ENCODE measurements at regions of chrX and their contacts with region 1.

Region 1: GRCh38 chrX:153609917-153610428 is 11.0 kb upstream of the CCNQ start:
- DNase-seq: peak; percentile 81
- ATAC-seq: peak; percentile 94
- H3K4me3 ChIP-seq: peak overlapping the region in 4 of 5 experiments; percentile 45 to 59 (median 56)
- H3K4me3 Mint-ChIP-seq: peak overlapping the region; percentile 85
- H3K27ac ChIP-seq: no peak overlapping the region
- H3K27ac Mint-ChIP-seq: no peak overlapping the region
- H3K4me1 ChIP-seq: peaks cover 0 to 15% of the 10 kb centered on the region in 2 donors
- H3K4me1 Mint-ChIP-seq: peaks cover 10% of the 10 kb centered on the region
- H3K27me3 ChIP-seq: peaks cover 0 to 5% (median 0%) of the 10 kb centered on the region in 4 experiments
- H3K27me3 Mint-ChIP-seq: peaks cover 12% of the 10 kb centered on the region
- CTCF ChIP-seq: peak; percentile 73

Region 2: GRCh38 chrX:153549231-153549630 is 60.7 kb before region 1 on chrX:
- CTCF ChIA-PET with region 1: no interaction called
- POLR2A ChIA-PET with region 1: no interaction called
- intact Hi-C with region 1: no loop called
- DNase-seq: no peak
- ATAC-seq: no peak
- H3K4me3 ChIP-seq: no peak overlapping the region
- H3K4me3 Mint-ChIP-seq: no peak overlapping the region
- H3K27ac ChIP-seq: no peak overlapping the region
- H3K27ac Mint-ChIP-seq: no peak overlapping the region
- H3K4me1 ChIP-seq: no peaks in the 10 kb centered on the region
- H3K4me1 Mint-ChIP-seq: no peaks in the 10 kb centered on the region
- H3K27me3 ChIP-seq: no peaks in the 10 kb centered on the region
- H3K27me3 Mint-ChIP-seq: peaks cover 6% of the 10 kb centered on the region
- CTCF ChIP-seq: no peak

Region 3: GRCh38 chrX:153582896-153583295 is 27.1 kb before region 1 on chrX:
- CTCF ChIA-PET with region 1: no interaction called
- POLR2A ChIA-PET with region 1: no interaction called
- intact Hi-C with region 1: no loop called
- DNase-seq: peak; percentile 84
- ATAC-seq: peak; percentile 100
- H3K4me3 ChIP-seq: peak overlapping the region in 3 of 5 experiments; percentile 9 to 26 (median 18)
- H3K4me3 Mint-ChIP-seq: peak overlapping the region; percentile 73
- H3K27ac ChIP-seq: peak overlapping the region in 1 of 2 donors; percentile 16
- H3K27ac Mint-ChIP-seq: peak overlapping the region; percentile 81
- H3K4me1 ChIP-seq: peaks cover 15 to 27% of the 10 kb centered on the region in 2 donors
- H3K4me1 Mint-ChIP-seq: peaks cover 25% of the 10 kb centered on the region
- H3K27me3 ChIP-seq: no peaks in the 10 kb centered on the region
- H3K27me3 Mint-ChIP-seq: no peaks in the 10 kb centered on the region
- CTCF ChIP-seq: no peak

Region 4: GRCh38 chrX:153662266-153662665 is 52.3 kb after region 1 on chrX:
- CTCF ChIA-PET with region 1: interaction called, 11 read pairs
- POLR2A ChIA-PET with region 1: no interaction called
- intact Hi-C with region 1: loop called (anchors 1 kb)
- DNase-seq: peak; percentile 73
- ATAC-seq: no peak
- H3K4me3 ChIP-seq: peak overlapping the region in 1 of 5 experiments; percentile 23
- H3K4me3 Mint-ChIP-seq: peak overlapping the region; percentile 50
- H3K27ac ChIP-seq: no peak overlapping the region
- H3K27ac Mint-ChIP-seq: no peak overlapping the region
- H3K4me1 ChIP-seq: peaks cover 3 to 5% of the 10 kb centered on the region in 2 donors
- H3K4me1 Mint-ChIP-seq: peaks cover 6% of the 10 kb centered on the region
- H3K27me3 ChIP-seq: peaks cover 0 to 3% (median 1%) of the 10 kb centered on the region in 4 experiments
- H3K27me3 Mint-ChIP-seq: peaks cover 34% of the 10 kb centered on the region
- CTCF ChIP-seq: peak; percentile 48